ENCODE measurements at regions of chr10 and their contacts with region 1.

Region 1: GRCh38 chr10:110547139-110547761 is 20.2 kb upstream of the SMC3 start:
- DNase-seq: peak in 1 of 2 experiments; percentile 29
- H3K4me3 ChIP-seq: no peak overlapping the region
- H3K27ac ChIP-seq: no peak overlapping the region
- H3K4me1 ChIP-seq: no peaks in the 10 kb centered on the region
- H3K27me3 ChIP-seq: no peaks in the 10 kb centered on the region
- CTCF ChIP-seq: peak in 2 of 3 experiments; percentile 63 to 82; a peak in 3 of 4 replicates
- EP300 ChIP-seq: no peak
- POLR2A ChIP-seq: no peak
- RAD21 ChIP-seq: peak; percentile 82 to 85

Region 2: GRCh38 chr10:110304780-110305421 is 242.3 kb before region 1 on chr10 and contains the start of gene SMNDC1:
- CTCF ChIA-PET with region 1: interaction called, 41 read pairs
- POLR2A ChIA-PET with region 1: interaction called, 3 read pairs
- DNase-seq: peak; percentile 97 to 99
- H3K4me3 ChIP-seq: peak within 1 kb of the TSS; percentile 66 to 90 (median 78)
- H3K27ac ChIP-seq: peak within 1 kb of the TSS; percentile 81
- H3K4me1 ChIP-seq: 0 out of 7 replicates have a peak, but pooled peaks cover 0 to 3% (median 0%) of the 10 kb centered on the region in 4 experiments
- H3K27me3 ChIP-seq: no peaks in the 10 kb centered on the region
- CTCF ChIP-seq: no peak
- EP300 ChIP-seq: 0 out of 3 replicates have a peak, but pooled peaks of 1 of the 2 experiments have one; percentile 6
- POLR2A ChIP-seq: peak; percentile 79 to 89
- RAD21 ChIP-seq: no peak
- total RNA-seq, gene SMNDC1: 48.6 and 53.5 TPM in 2 replicates

Region 3: DNA sequence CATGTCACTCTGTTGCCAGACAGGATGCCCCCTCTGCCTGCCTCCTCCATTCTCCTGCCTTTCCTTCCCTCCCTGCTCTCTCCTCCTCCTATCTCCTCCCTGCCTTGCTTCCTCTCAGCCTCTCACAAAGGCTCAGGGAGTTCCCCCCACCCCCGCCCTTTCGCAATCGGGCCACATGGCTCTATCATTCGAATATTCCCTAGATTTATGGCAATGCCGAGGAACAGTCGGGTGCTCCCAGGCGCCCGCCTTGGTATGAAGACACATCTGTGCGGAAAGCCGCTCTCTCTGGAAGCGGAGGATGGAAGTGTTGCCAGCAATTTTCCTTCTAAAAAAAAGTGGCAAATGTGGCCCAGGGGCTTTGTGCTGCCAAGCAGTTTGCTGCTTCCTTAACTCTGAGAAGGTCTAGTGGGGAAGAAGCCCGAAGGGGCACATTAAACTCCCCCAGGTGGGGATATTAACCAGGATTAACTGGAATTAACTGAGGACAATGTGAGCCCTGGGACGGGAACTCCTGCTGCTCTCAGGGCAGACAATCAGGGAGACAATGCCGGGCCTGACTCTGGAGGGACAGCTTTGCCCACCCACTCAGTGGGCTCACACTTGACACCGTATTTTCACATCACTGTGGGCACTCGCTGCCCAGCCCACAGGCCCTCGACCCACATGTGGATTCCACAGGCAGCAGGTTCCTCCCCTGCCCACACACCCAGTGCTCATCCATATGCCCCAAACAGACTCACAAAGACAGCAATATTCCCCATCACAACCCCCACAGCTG is 154.2 kb before region 1 on chr10:
- CTCF ChIA-PET with region 1: interaction called, 14 read pairs
- POLR2A ChIA-PET with region 1: no interaction called
- DNase-seq: no peak
- H3K4me3 ChIP-seq: no peak overlapping the region
- H3K27ac ChIP-seq: no peak overlapping the region
- H3K4me1 ChIP-seq: peaks cover 4 to 12% (median 8%) of the 10 kb centered on the region in 4 experiments
- H3K27me3 ChIP-seq: 0 out of 7 replicates have a peak, but pooled peaks cover 0 to 2% (median 0%) of the 10 kb centered on the region in 4 experiments
- CTCF ChIP-seq: no peak
- EP300 ChIP-seq: no peak
- POLR2A ChIP-seq: no peak
- RAD21 ChIP-seq: no peak

Region 4: GRCh38 chr10:110530131-110530831 is 17.0 kb before region 1 on chr10:
- CTCF ChIA-PET with region 1: interaction called, 25 read pairs
- POLR2A ChIA-PET with region 1: interaction called, 4 read pairs
- DNase-seq: peak; percentile 54 to 86
- H3K4me3 ChIP-seq: peak overlapping the region; percentile 27 to 65 (median 42); a peak in 7 of 8 replicates
- H3K27ac ChIP-seq: peak overlapping the region; percentile 57; the same call in 1 of the 2 replicates
- H3K4me1 ChIP-seq: peaks cover 4 to 17% (median 5%) of the 10 kb centered on the region in 4 experiments
- H3K27me3 ChIP-seq: no peaks in the 10 kb centered on the region; a peak in 1 of 7 replicates
- CTCF ChIP-seq: no peak
- EP300 ChIP-seq: no peak
- POLR2A ChIP-seq: peak in 1 of 2 experiments; percentile 30; a peak in 1 of 3 replicates
- RAD21 ChIP-seq: 0 out of 4 replicates have a peak, but pooled peaks of 1 of the 2 experiments have one; percentile 0

Region 5: DNA sequence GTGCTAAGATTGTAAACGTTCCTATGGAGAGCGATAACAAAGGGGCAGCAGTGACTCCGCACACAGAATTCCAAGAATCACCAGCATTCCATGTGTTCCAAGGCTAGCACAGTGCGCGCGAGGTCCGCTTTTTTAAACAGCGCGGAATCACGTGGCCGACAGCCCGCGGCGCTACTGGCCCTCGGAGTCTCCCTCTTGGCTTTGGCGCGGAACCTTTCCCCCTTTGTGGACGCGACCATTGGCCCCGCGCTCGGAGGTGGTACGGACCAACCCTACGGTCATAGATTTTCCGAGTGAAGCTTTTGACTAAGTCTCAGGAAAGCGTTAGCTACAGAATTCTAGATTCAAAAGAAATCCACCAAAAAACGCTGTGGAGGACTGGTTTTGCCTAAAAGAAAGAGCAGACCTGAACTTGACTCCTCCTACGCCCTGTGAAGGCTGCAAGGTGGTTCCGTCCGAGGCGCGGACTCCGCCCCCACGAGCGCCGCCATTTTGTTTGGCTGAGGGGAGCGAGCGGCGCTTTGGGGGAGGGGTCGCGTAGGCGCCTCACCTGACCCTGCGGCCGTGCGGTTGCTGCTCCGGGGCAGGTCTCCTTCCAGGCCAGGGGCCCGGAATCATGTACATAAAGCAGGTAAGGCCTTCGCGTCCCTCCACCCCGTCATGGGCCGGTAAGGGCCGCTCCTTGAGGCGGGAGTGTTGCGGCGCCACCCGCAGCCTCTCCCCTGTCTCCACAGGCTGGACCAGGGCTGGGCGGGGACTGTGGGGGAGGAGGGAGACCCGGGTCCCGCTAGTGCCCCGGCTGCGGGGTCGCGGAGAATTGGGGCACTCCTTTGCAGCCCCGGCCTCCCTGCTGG is 20.2 kb after region 1 on chr10 and contains the start of gene SMC3:
- CTCF ChIA-PET with region 1: interaction called, 14 read pairs
- POLR2A ChIA-PET with region 1: interaction called, 6 read pairs
- DNase-seq: peak; percentile 87 to 96
- H3K4me3 ChIP-seq: peak within 1 kb of the TSS; percentile 88 to 95 (median 91)
- H3K27ac ChIP-seq: peak within 1 kb of the TSS; percentile 98
- H3K4me1 ChIP-seq: peaks cover 0 to 4% (median 0%) of the 10 kb centered on the region in 4 experiments; a peak in 2 of 7 replicates
- H3K27me3 ChIP-seq: no peaks in the 10 kb centered on the region
- CTCF ChIP-seq: no peak
- EP300 ChIP-seq: peak; percentile 17 to 98
- POLR2A ChIP-seq: peak in 1 of 2 experiments; percentile 87; a peak in 2 of 3 replicates
- RAD21 ChIP-seq: no peak; a peak in 1 of 4 replicates
- total RNA-seq, gene SMC3: 89.8 and 93.4 TPM in 2 replicates

Measured in H1 (cell line).